ENCODE measurements at regions of chr19 and their contacts with region 1.

Region 1: DNA sequence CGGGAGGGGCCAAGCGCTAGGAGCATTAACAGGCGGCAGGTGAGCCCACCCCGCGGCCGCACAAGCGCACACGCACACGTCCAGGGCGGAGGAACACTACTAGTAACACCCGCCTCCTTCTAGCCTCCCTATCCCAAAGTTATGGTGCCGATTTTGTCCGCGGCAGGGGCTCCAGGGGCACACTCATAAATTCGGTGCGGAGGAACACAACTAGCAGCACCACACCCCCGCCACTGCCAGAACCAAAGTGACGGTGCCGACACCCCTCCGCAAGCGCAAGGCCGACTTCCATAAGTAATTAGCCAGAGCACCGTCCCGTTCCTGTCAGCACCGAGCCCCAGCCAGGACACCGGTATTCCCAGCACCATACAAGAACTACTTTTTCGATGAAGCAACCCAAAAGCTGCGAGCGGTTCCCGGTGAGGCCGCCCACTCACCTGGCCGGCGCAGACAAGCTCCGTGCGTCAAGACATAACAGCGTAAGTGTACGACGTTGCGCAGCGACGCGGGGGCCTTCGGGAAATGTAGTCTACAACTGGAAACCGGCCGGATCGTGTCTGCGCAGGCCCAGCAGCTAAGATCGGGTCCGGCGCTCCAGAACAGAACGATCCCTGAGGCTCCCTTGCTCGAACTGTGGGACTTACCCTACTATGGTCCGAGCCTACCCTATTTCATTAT is at the starts of genes ZNF540 and ZNF571:
- DNase-seq: peak; percentile 90
- ATAC-seq: peak; percentile 98
- H3K4me3 ChIP-seq: peak within 1 kb of the TSS; percentile 97
- H3K27ac ChIP-seq: peak within 1 kb of the TSS; percentile 66
- H3K4me1 ChIP-seq: no peaks in the 10 kb centered on the region; the same call in 1 of the 2 replicates
- H3K27me3 ChIP-seq: no peaks in the 10 kb centered on the region
- CTCF ChIP-seq: no peak
- total RNA-seq, gene ZNF540: 0.22 TPM in 1 of 2 replicates, not detected in the other
- total RNA-seq, gene ZNF571: 0.58 and 1.4 TPM in 2 replicates

Region 2: DNA sequence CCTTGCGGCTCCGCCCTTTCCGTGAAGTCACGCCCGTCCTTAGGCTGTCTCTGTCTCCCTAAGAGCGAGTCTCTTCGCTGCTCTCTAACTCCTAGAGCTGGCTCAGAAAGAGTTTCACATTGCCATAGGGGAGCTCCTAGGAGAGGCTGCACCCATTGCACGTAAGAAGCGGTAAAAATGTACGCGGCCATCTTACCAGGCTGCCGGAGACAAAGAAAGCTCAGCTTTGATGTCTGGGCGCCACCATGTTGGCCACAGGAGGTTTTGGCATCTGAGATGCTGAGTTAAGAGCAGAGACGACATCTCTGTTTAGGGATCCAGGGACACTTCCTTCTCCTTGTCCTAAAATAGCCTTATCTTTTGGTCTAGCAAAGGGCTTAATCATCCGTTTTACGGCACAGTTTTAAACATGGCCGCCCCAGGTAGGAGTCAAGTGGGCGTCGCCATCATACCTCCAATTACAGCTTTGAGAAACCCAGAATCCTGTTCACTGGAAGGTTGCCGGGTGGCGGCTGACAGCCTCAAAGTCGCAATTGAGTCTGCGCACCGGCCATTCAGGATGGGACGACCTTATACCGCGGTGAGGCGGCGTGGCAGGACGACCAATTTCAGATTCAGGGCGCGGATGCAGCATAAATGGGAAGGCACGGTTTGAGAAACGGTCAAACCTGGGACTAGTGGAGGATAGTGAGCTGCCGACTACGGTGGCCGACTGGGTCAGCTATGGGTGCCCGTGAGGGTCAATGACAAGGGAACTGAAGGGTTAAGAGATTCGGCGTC is 87.9 kb before region 1 on chr19 and contains the start of gene ZNF793:
- CTCF ChIA-PET with region 1: no interaction called
- POLR2A ChIA-PET with region 1: interaction called, 13 read pairs
- intact Hi-C with region 1: no loop called
- DNase-seq: no peak
- ATAC-seq: no peak
- H3K4me3 ChIP-seq: no peak within 1 kb of the TSS
- H3K27ac ChIP-seq: no peak within 1 kb of the TSS
- H3K4me1 ChIP-seq: no peaks in the 10 kb centered on the region
- H3K27me3 ChIP-seq: no peaks in the 10 kb centered on the region
- CTCF ChIP-seq: no peak
- total RNA-seq, gene ZNF793: not detected in 2 replicates

Region 3: GRCh38 chr19:37654118-37654517 is 59.7 kb after region 1 on chr19:
- CTCF ChIA-PET with region 1: no interaction called
- POLR2A ChIA-PET with region 1: no interaction called
- intact Hi-C with region 1: no loop called
- DNase-seq: no peak
- ATAC-seq: no peak
- H3K4me3 ChIP-seq: peak overlapping the region; percentile 83
- H3K27ac ChIP-seq: no peak overlapping the region
- H3K4me1 ChIP-seq: peaks cover 8% of the 10 kb centered on the region; the same call in 1 of the 2 replicates
- H3K27me3 ChIP-seq: no peaks in the 10 kb centered on the region
- CTCF ChIP-seq: no peak

Region 4: DNA sequence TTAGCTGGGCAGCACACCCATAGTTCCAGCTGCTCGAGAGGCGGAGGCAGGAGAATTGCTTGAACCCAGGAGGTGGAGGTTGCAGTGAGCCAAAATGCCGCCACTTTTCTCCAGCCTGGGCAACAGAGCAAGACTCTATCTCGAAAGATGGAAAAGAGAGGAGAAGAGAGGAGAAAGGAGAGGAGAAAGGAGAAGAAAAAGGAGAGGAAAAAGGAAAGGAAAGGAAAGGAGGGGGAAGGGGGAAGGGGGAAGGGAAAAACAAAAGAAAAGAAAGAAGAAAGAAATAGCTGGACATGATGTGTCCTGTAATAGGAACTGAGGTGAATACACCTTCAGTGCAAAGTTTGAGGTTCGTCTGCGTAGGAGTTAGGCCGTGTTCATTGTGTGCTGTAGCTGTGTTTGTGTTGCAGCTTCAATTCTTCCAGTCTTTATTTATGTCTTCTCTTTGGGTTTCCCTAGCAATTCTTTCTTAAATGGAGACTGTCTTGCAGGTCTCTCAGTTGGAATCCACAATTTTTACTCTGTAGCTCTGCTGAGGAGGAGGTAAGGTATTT is 111.7 kb after region 1 on chr19:
- CTCF ChIA-PET with region 1: no interaction called
- POLR2A ChIA-PET with region 1: no interaction called
- intact Hi-C with region 1: no loop called
- DNase-seq: no peak
- ATAC-seq: no peak
- H3K4me3 ChIP-seq: no peak overlapping the region
- H3K27ac ChIP-seq: no peak overlapping the region
- H3K4me1 ChIP-seq: no peaks in the 10 kb centered on the region
- H3K27me3 ChIP-seq: no peaks in the 10 kb centered on the region
- CTCF ChIP-seq: no peak